ENCODE measurements at regions of chr19 and their contacts with region 1.

Region 1: DNA sequence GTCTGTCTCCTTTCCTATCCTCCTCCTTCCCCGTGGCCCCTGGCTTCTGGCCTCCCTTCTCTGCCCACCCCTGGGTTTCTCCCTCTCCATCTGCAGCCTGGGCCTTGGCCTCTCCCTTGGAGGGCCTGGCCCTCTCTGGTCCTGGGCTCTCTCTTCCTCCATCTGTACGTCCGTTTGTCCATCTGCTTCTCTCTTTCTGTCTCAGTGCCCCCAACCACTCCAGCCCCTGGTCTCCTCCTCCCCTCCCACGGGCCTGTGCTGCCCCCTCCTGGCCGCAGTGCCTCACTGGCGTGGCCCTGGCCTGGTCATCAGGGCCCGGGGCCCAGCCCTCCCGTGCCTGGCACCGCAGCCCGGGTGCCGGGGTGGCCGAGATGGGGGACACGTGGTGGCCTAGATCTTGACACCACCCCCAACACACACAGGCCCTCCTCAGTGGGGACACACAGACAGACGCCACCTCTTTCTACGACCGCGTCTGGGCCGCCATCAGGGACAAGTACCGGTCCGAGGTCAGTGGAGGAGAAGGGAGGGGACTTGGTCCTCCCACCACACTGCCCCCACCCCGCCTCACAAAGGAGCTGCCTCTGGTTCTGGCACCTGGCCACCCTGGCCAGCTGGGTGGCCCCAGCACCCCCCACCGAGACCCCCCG is 11.3 kb downstream of the PRKCSH start:
- DNase-seq: peak; percentile 70 to 91
- ATAC-seq: peak; percentile 72
- H3K4me3 ChIP-seq: no peak overlapping the region
- H3K27ac ChIP-seq: no peak overlapping the region
- H3K4me1 ChIP-seq: no peaks in the 10 kb centered on the region
- H3K27me3 ChIP-seq: no peaks in the 10 kb centered on the region

Region 2: GRCh38 chr19:11242864-11243797 is 203.6 kb before region 1 on chr19:
- intact Hi-C with region 1: loop called in 1 of 2 experiments (anchors 2 kb)
- DNase-seq: peak; percentile 96 to 98
- ATAC-seq: peak; percentile 94
- H3K4me3 ChIP-seq: no peak overlapping the region
- H3K27ac ChIP-seq: no peak overlapping the region
- H3K4me1 ChIP-seq: no peaks in the 10 kb centered on the region
- H3K27me3 ChIP-seq: no peaks in the 10 kb centered on the region

Region 3: DNA sequence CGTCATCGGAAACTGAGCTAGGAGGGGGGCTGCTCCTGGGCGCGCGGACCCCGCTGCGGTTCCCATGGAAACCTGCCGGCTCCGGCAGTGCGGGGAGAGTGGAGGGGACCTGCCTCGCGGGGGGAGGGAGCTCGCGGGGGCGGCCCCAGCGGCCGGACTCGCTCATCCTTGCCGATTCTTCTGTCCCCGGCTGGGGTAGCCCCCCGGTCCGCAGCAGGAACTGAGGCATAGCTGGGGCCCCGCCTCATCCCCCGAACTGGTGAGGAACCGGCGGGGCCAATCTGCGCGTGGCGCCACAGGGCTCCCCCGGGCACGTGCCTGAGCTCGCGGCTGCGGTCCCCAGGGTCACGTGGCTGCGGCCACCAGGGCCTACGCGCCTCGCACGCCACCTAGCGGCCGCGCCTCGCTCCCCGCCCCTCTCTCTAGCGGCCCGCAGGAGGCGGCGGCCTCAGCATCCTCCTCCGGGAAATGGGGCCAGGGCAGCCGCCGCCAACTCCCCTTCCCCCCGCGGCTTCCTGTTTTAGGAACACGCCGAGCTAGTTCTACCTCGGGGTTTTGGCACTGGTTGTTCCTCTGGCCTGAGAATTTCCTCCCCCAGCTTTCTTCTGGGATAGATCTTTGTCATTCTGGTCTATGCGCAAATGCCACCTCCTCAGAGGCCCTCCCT is 35.7 kb after region 1 on chr19:
- intact Hi-C with region 1: no loop called
- DNase-seq: peak; percentile 89 to 95
- ATAC-seq: peak; percentile 93
- H3K4me3 ChIP-seq: no peak overlapping the region
- H3K27ac ChIP-seq: no peak overlapping the region
- H3K4me1 ChIP-seq: no peaks in the 10 kb centered on the region
- H3K27me3 ChIP-seq: no peaks in the 10 kb centered on the region

Region 4: GRCh38 chr19:11570039-11570462 is 123.3 kb after region 1 on chr19:
- intact Hi-C with region 1: no loop called
- DNase-seq: no peak
- ATAC-seq: no peak
- H3K4me3 ChIP-seq: no peak overlapping the region
- H3K27ac ChIP-seq: no peak overlapping the region
- H3K4me1 ChIP-seq: no peaks in the 10 kb centered on the region
- H3K27me3 ChIP-seq: no peaks in the 10 kb centered on the region